CD14-positive monocyte (primary cell): ENCODE measurements at regions of chr5 and their contacts with region 1.

Region 1: GRCh38 chr5:1568201-1568979 is 44.6 kb upstream of the LPCAT1 start:
- DNase-seq: no peak
- H3K4me3 ChIP-seq: no peak overlapping the region
- H3K4me3 Mint-ChIP-seq: peak overlapping the region in 1 of 2 donors; percentile 12
- H3K27ac ChIP-seq: no peak overlapping the region
- H3K27ac Mint-ChIP-seq: peak overlapping the region in 4 of 7 donors; percentile 31 to 85 (median 68)
- H3K4me1 ChIP-seq: peaks cover 24 to 26% of the 10 kb centered on the region in 2 donors
- H3K4me1 Mint-ChIP-seq: peaks cover 32% of the 10 kb centered on the region
- H3K27me3 ChIP-seq: no peaks in the 10 kb centered on the region
- H3K27me3 Mint-ChIP-seq: peaks cover 0 to 4% (median 4%) of the 10 kb centered on the region in 3 donors
- CTCF ChIP-seq: no peak

Region 2: DNA sequence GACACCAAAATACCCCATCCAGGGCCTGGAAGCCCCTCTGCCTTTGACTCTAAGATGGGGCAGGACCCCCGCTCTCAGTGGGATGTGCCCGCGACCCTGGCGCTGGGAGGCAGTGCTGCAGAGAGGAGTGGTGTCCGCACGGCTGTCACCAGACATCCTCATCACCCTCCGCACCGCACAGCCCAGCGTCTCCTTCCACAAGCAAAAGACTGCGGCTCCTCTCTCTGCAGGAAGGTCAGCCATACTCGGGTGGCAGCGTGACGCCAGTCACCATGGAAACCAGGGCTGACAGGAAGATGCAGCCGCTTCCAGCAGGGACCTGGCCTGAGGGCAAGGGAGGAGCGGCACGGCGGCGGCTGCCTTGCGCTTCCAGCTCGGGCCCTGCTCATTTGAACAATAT is 106.0 kb before region 1 on chr5:
- intact Hi-C with region 1: no loop called
- DNase-seq: no peak
- H3K4me3 ChIP-seq: no peak overlapping the region
- H3K4me3 Mint-ChIP-seq: no peak overlapping the region
- H3K27ac ChIP-seq: no peak overlapping the region
- H3K27ac Mint-ChIP-seq: peak overlapping the region in 3 of 7 donors; percentile 34 to 73 (median 42)
- H3K4me1 ChIP-seq: no peaks in the 10 kb centered on the region
- H3K4me1 Mint-ChIP-seq: no peaks in the 10 kb centered on the region
- H3K27me3 ChIP-seq: no peaks in the 10 kb centered on the region
- H3K27me3 Mint-ChIP-seq: peaks cover 0 to 1% (median 0%) of the 10 kb centered on the region in 3 donors
- CTCF ChIP-seq: no peak

Region 3: GRCh38 chr5:1474183-1474848 is 94.1 kb before region 1 on chr5:
- intact Hi-C with region 1: loop called (anchors 2 to 5 kb)
- DNase-seq: no peak
- H3K4me3 ChIP-seq: no peak overlapping the region
- H3K4me3 Mint-ChIP-seq: no peak overlapping the region
- H3K27ac ChIP-seq: peak overlapping the region; percentile 22 to 59
- H3K27ac Mint-ChIP-seq: peak overlapping the region in 6 of 7 donors; percentile 80 to 100 (median 92)
- H3K4me1 ChIP-seq: peaks cover 32 to 37% of the 10 kb centered on the region in 2 donors
- H3K4me1 Mint-ChIP-seq: peaks cover 47% of the 10 kb centered on the region
- H3K27me3 ChIP-seq: no peaks in the 10 kb centered on the region
- H3K27me3 Mint-ChIP-seq: peaks cover 0 to 2% (median 0%) of the 10 kb centered on the region in 3 donors
- CTCF ChIP-seq: no peak

Region 4: DNA sequence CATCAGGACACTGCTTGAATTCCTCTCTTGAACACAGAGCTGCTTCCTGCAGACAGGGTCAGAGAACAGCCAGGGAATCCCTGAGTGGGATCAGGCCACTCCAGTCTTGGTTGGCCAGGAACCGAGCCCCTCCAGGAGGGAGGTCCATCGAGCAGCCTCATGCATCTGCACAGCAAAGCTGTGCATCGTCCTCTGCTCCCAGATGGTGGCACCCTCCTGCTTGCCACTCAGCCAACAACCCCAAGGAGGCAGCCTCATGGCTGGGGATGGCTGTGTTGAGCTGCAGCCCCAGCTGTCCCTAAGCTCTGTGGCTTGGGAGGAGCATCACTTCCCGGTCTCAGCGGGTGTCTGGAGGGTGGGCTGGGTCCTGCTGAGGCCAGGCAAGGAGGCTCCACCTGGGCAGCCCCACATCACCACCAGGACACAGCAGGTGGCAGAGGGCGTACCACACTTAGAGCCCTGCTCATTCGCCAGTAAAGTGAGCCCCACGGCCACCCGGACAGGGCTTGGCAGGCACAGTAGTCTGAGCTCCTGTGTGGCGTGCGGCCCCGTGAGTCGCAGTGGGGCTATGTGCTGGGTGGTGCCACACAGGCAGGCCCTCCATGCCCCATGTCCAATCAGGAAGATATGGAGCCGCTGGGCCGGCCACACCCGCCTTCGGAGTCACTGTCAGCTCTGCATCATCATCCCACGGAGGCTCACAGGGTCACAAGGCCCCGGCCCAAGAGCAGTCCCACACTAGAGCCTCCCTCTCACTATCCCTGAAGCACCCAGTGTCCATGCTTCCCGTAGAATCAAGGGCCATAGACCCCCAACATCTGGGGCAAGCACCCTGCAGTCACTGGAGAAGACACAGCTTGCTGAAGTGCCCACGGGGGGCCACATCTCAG is 56.5 kb before region 1 on chr5:
- intact Hi-C with region 1: loop called (anchors 5 to 10 kb)
- DNase-seq: peak in 1 of 3 donors; percentile 3
- H3K4me3 ChIP-seq: no peak overlapping the region
- H3K4me3 Mint-ChIP-seq: no peak overlapping the region
- H3K27ac ChIP-seq: no peak overlapping the region
- H3K27ac Mint-ChIP-seq: peak overlapping the region in 3 of 7 donors; percentile 40 to 67 (median 50)
- H3K4me1 ChIP-seq: peaks cover 37 to 45% of the 10 kb centered on the region in 2 donors
- H3K4me1 Mint-ChIP-seq: peaks cover 53% of the 10 kb centered on the region
- H3K27me3 ChIP-seq: no peaks in the 10 kb centered on the region
- H3K27me3 Mint-ChIP-seq: peaks cover 0 to 7% (median 0%) of the 10 kb centered on the region in 3 donors
- CTCF ChIP-seq: peak; percentile 3

Region 5: DNA sequence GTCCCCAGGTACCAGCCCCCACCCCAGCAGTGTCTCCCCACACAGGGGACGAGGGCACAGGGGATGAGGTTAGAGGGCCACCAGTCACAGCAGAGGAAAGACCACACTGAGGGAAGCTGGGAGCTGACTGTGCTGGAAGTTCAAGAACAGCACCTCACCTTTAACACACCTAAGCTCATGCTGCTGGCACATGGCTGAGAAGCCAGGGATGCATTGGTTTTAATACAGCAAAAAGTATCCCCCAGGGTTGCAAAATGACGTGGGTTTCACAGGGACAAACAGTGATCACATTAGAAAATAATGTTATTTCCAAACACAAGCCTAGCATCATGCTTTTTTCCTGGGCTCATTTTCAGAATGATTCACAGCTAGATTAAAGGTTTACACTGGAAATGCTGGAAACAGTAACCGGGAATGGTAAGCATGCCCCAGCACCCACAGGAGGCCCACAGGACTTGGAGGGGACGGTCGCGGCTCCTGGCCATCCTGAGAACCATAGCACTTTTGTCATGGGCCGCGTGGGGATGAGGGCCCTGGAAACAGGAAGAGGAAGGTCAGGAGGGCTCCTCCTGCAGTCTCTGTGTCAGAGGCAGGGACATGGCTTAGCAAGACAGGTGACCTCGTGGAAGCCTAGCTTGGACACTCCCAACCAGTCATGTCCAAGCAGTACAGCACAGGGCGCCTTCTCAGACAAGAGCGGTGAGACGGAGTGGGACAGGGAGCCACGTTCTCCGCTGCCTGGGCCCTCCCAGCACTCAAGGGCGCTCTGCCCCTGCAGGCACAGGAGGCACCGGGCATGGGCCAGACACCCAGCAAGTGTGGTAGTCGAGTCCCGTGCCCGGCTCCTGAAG is 51.4 kb before region 1 on chr5:
- intact Hi-C with region 1: loop called (anchors 5 to 10 kb)
- DNase-seq: peak; percentile 39 to 68 (median 58)
- H3K4me3 ChIP-seq: no peak overlapping the region
- H3K4me3 Mint-ChIP-seq: peak overlapping the region; percentile 16 to 62
- H3K27ac ChIP-seq: peak overlapping the region; percentile 81 to 86
- H3K27ac Mint-ChIP-seq: peak overlapping the region; percentile 86 to 97 (median 91)
- H3K4me1 ChIP-seq: peaks cover 48 to 56% of the 10 kb centered on the region in 2 donors
- H3K4me1 Mint-ChIP-seq: peaks cover 60% of the 10 kb centered on the region
- H3K27me3 ChIP-seq: no peaks in the 10 kb centered on the region
- H3K27me3 Mint-ChIP-seq: peaks cover 0 to 4% (median 0%) of the 10 kb centered on the region in 3 donors
- CTCF ChIP-seq: no peak

Region 6: GRCh38 chr5:1532384-1532783 is 36.0 kb before region 1 on chr5:
- intact Hi-C with region 1: loop called in 1 of 2 experiments (anchors 5 kb)
- DNase-seq: no peak
- H3K4me3 ChIP-seq: no peak overlapping the region
- H3K4me3 Mint-ChIP-seq: no peak overlapping the region
- H3K27ac ChIP-seq: no peak overlapping the region
- H3K27ac Mint-ChIP-seq: no peak overlapping the region
- H3K4me1 ChIP-seq: peaks cover 11 to 14% of the 10 kb centered on the region in 2 donors
- H3K4me1 Mint-ChIP-seq: peaks cover 13% of the 10 kb centered on the region
- H3K27me3 ChIP-seq: no peaks in the 10 kb centered on the region
- H3K27me3 Mint-ChIP-seq: peaks cover 6 to 7% (median 6%) of the 10 kb centered on the region in 3 donors
- CTCF ChIP-seq: no peak

Region 7: DNA sequence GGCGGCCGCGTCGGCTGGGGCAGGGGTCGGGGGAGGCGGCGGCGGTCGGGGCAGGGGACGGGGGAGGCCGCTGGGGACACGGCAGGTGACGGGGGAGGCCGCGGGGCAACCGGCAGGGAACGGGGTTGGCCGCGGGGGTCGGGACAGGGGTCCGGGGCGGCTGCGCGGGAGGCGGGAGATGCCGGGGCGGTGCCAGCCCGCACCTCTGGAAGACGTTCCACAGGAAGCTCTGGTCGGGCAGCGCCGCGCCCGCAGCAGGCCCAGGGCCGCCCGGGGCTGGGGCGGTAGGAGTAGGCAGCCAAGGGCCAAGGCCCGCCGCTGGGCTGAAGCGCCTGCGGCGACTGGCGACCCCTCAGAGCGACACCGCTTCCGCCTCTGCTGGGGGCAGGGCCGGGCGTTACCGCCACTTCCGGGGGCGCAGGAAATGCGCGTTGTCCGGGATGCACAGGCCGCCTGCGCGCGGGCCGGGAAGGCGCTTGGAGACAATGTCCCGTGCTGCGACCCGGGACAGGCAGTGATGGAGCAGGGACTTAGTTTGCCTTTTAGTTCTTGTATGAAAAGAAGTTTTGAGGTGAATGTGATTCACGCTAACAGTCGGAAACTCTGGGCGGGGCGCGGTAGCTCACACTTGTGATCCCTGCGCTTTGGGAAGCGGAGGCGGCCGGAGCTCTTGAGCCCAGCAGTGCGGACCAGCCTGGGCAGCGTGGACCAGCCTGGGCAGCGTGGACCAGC is 65.4 kb after region 1 on chr5:
- intact Hi-C with region 1: no loop called
- DNase-seq: peak; percentile 16 to 71 (median 29)
- H3K4me3 ChIP-seq: peak overlapping the region; percentile 59 to 87 (median 59)
- H3K4me3 Mint-ChIP-seq: peak overlapping the region; percentile 88 to 97
- H3K27ac ChIP-seq: peak overlapping the region; percentile 17 to 26
- H3K27ac Mint-ChIP-seq: peak overlapping the region in 2 of 7 donors; percentile 85 to 93
- H3K4me1 ChIP-seq: peaks cover 5 to 6% of the 10 kb centered on the region in 2 donors
- H3K4me1 Mint-ChIP-seq: peaks cover 10% of the 10 kb centered on the region
- H3K27me3 ChIP-seq: peaks cover 8 to 18% of the 10 kb centered on the region in 2 donors
- H3K27me3 Mint-ChIP-seq: peaks cover 46 to 63% (median 48%) of the 10 kb centered on the region in 3 donors
- CTCF ChIP-seq: no peak

Region 8: DNA sequence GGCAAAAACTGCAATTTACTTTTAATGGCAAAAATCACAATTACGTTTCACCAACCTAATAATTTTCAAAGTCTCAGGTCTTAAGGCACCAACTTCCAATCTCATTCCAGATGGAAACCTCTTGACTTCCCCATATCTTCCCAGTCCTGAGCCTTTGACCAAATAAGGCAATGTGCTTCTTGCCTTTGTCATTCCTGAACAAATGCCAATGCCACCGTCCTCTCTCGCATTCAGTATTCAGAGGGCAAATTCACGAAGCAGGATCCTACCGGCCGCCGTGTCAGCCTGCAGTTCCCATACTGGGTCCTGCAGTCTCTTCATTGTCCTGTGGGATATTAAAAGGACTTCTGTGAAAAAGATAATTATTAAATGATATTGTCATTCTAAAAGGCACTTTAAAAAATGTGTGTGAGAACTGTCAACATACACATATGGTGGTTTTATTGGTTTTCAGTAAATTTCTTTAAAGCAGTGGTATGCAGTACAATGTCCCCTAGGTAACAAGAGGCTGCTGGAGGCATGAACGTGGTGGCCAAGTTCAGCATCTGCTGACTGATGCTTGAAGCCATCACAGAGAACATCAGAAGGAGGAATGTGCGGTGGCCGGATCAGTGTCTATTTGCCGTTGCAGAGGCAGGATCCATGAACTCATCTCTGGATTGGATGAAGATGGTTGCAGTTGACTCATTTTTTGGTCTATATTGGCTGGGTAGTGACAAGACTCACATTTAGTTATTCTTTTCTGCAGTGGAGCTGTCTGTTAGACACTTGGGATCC is 415.7 kb after region 1 on chr5:
- intact Hi-C with region 1: no loop called
- DNase-seq: no peak
- H3K4me3 ChIP-seq: no peak overlapping the region
- H3K4me3 Mint-ChIP-seq: no peak overlapping the region
- H3K27ac ChIP-seq: no peak overlapping the region
- H3K27ac Mint-ChIP-seq: no peak overlapping the region
- H3K4me1 ChIP-seq: no peaks in the 10 kb centered on the region
- H3K4me1 Mint-ChIP-seq: no peaks in the 10 kb centered on the region
- H3K27me3 ChIP-seq: no peaks in the 10 kb centered on the region
- H3K27me3 Mint-ChIP-seq: peaks cover 0 to 6% (median 2%) of the 10 kb centered on the region in 3 donors
- CTCF ChIP-seq: no peak